Naive thymus-derived CD8-positive, alpha-beta T cell (primary cell): ENCODE measurements at regions of chr3 and their contacts with region 1.

Region 1: DNA sequence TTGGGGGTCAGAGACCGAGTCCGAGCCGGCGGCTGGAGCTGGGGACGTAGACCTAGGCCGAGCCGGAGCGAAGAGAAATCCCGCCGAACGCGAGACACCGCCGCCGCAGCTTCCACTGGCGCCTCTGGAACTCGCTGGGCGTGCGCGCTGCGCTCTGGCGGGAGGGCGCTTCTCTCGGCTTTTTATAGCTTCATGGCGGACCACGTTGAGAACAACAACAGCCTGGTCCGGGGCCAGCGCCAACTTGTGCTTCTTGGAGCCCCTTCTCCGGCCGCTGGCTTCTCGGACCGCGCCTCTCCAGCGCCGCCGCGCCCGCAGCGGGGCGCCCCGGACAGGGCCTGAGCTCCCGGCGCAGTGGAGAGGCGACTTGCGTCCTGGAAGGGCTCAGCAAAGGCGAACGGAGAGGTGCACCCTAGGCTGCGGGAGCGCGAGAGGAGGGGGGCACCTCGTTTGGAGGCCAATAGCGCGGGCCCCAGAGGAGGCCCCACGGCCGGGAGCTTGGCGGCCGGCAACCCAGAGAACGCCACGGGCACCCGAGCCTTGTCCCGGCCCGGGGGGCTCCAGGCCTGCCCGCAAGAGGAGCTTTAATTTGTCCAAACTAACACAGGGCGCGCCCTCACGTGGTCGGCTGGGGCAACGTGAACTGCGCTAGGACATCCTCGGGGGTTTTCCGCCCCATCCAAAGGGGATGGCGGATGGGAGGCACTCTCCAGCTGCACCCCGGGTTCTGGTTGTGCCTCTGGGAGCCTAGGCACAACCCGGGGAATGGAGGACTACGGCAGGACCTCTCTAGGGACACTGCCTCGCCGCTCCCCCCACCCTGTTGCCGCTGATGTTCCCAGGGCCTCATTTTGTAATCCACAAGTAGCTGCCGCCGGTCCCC is 37.7 kb downstream of the HMCES start:
- DNase-seq: peak; percentile 75 to 92 (median 88)
- ATAC-seq: peak; percentile 54 to 59
- H3K4me3 Mint-ChIP-seq: peak overlapping the region; percentile 78 to 97 (median 89)
- H3K27ac Mint-ChIP-seq: peak overlapping the region; percentile 66 to 96 (median 88)
- H3K4me1 Mint-ChIP-seq: peaks cover 21 to 32% (median 31%) of the 10 kb centered on the region in 4 donors
- H3K27me3 Mint-ChIP-seq: no peaks in the 10 kb centered on the region

Region 2: GRCh38 chr3:129026728-129027543 is 289.4 kb before region 1 on chr3:
- POLR2A ChIA-PET with region 1: interaction called, 11 read pairs
- DNase-seq: peak; percentile 87 to 96 (median 92)
- ATAC-seq: peak; percentile 97
- H3K4me3 Mint-ChIP-seq: peak overlapping the region; percentile 84 to 94 (median 90)
- H3K27ac Mint-ChIP-seq: peak overlapping the region; percentile 92 to 99 (median 98)
- H3K4me1 Mint-ChIP-seq: peaks cover 16 to 32% (median 30%) of the 10 kb centered on the region in 4 donors
- H3K27me3 Mint-ChIP-seq: no peaks in the 10 kb centered on the region

Region 3: GRCh38 chr3:129183569-129184395 is 132.6 kb before region 1 on chr3 and contains the start of gene CNBP:
- POLR2A ChIA-PET with region 1: interaction called, 16 read pairs
- DNase-seq: peak; percentile 87 to 96 (median 93)
- ATAC-seq: peak; percentile 95 to 97
- H3K4me3 Mint-ChIP-seq: peak within 1 kb of the TSS; percentile 91 to 99 (median 96)
- H3K27ac Mint-ChIP-seq: peak within 1 kb of the TSS; percentile 92 to 100 (median 98)
- H3K4me1 Mint-ChIP-seq: peaks cover 14 to 50% (median 37%) of the 10 kb centered on the region in 4 donors
- H3K27me3 Mint-ChIP-seq: no peaks in the 10 kb centered on the region
- polyA plus RNA-seq, gene CNBP: 843 to 960 (median 927) TPM

Region 4: DNA sequence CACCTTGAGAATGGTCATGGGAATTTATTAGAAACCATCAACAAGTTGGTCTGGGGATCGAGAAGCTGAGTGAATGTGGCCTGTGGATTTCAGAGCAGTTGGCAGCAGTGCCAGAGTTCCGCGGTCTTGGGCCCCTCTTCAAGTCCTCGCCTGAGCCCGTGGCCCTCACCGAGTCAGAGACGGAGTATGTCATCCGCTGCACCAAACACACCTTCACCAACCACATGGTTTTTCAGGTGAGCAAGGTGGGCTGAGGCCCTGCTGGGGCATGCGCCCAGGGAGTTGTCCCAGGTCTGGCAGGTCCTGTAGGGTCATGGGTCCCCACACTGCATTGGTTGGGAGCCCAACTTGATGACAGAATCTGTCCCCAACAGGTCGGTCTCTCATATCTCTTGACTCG is 44.7 kb before region 1 on chr3:
- POLR2A ChIA-PET with region 1: interaction called, 151 read pairs
- DNase-seq: no peak
- ATAC-seq: no peak
- H3K4me3 Mint-ChIP-seq: no peak overlapping the region
- H3K27ac Mint-ChIP-seq: peak overlapping the region in 4 of 10 donors; percentile 17 to 86 (median 44)
- H3K4me1 Mint-ChIP-seq: peaks cover 0 to 13% (median 4%) of the 10 kb centered on the region in 4 donors
- H3K27me3 Mint-ChIP-seq: no peaks in the 10 kb centered on the region

Region 5: DNA sequence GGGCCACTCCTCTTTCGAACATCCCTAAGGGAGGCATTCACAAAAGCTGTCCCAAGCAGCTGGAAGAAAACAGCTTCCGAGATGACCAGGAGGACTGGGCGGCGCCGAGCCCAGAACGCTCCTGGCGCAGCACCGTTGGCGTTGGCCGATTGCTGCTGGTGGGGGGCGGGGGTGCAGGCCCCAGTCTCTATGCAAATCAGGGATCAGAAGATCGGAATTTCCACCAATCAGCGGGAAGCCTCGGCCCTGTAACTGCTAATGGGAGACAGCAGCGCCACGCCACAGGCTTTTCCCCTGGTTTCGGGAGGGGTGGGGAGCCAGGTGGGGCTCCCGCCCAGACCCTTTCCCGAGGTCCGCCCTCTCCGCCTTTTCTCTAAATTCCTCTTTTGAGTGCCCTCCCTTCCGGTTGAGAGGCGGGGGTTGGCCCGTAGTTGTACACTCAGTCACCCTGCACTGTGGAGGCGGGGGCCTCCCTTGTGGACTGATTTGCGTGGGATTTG is 10.7 kb before region 1 on chr3:
- POLR2A ChIA-PET with region 1: interaction called, 24 read pairs
- DNase-seq: no peak
- ATAC-seq: peak in 1 of 2 donors; percentile 35
- H3K4me3 Mint-ChIP-seq: peak overlapping the region in 1 of 10 donors; percentile 55
- H3K27ac Mint-ChIP-seq: peak overlapping the region in 7 of 10 donors; percentile 14 to 71 (median 56)
- H3K4me1 Mint-ChIP-seq: peaks cover 9 to 26% (median 18%) of the 10 kb centered on the region in 4 donors
- H3K27me3 Mint-ChIP-seq: no peaks in the 10 kb centered on the region

Region 6: GRCh38 chr3:129371041-129371826 is 54.9 kb after region 1 on chr3:
- POLR2A ChIA-PET with region 1: no interaction called
- DNase-seq: no peak
- ATAC-seq: no peak
- H3K4me3 Mint-ChIP-seq: no peak overlapping the region
- H3K27ac Mint-ChIP-seq: no peak overlapping the region
- H3K4me1 Mint-ChIP-seq: peaks cover 0 to 2% (median 0%) of the 10 kb centered on the region in 4 donors
- H3K27me3 Mint-ChIP-seq: no peaks in the 10 kb centered on the region

Region 7: DNA sequence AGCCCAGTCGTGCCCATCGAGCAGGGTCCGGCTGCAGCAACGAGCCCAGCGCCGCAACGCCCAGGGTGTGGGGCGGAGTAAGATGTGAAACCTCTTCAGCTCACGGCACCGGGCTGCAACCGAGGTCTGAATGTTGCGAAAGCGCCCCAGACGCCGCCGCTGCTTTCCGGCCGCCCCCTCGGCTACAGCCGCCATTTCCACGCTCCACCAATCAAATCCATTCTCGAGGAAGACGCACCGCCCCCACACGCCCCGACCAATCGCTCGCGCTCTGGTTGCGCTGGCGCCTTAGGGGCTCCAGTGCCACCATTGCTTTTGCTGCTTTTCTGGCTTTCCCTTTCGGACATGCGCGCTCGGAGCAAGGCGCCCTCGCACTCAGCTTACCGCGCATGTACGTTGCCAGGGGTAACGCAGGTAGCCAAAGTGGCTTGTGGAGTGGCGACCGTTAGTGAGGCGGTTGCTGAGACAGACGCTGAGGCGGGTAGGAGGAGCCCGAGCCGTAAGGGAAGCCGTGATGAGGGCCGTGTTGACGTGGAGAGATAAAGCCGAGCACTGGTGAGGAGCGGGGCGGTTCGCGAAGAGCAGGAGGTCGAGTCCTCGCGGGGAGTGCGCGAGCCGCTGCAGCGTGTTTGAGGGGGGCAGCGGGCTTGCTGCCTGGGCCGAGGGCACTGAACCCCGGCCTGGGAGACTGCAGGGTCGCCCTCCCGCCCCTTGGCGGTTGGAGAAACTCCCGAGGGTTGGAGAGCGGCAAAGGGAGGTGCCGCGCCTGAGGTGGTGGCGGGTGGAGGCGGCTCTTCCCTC is 123.6 kb after region 1 on chr3 and contains the starts of genes IFT122 and MBD4:
- POLR2A ChIA-PET with region 1: interaction called, 20 read pairs
- DNase-seq: peak; percentile 92 to 99 (median 99)
- ATAC-seq: peak; percentile 87 to 88
- H3K4me3 Mint-ChIP-seq: peak within 1 kb of the TSS; percentile 90 to 99 (median 96)
- H3K27ac Mint-ChIP-seq: peak within 1 kb of the TSS; percentile 95 to 99 (median 98)
- H3K4me1 Mint-ChIP-seq: peaks cover 30 to 84% (median 67%) of the 10 kb centered on the region in 4 donors
- H3K27me3 Mint-ChIP-seq: no peaks in the 10 kb centered on the region
- polyA plus RNA-seq, gene IFT122: 3.3 to 6.5 (median 3.5) TPM
- polyA plus RNA-seq, gene MBD4: 33.6 to 40.0 (median 35.9) TPM